ENCODE measurements at regions of chr2 and their contacts with region 1.

Region 1: GRCh38 chr2:100818606-100819369 is 1.2 kb upstream of the NPAS2 start:
- DNase-seq: peak; percentile 90
- H3K4me3 ChIP-seq: peak overlapping the region; percentile 61 to 87 (median 63)
- H3K27ac ChIP-seq: peak overlapping the region; percentile 85
- H3K4me1 ChIP-seq: peaks cover 49% of the 10 kb centered on the region
- H3K27me3 ChIP-seq: no peaks in the 10 kb centered on the region
- CTCF ChIP-seq: peak; percentile 44 to 51
- POLR2A ChIP-seq: no peak

Region 2: DNA sequence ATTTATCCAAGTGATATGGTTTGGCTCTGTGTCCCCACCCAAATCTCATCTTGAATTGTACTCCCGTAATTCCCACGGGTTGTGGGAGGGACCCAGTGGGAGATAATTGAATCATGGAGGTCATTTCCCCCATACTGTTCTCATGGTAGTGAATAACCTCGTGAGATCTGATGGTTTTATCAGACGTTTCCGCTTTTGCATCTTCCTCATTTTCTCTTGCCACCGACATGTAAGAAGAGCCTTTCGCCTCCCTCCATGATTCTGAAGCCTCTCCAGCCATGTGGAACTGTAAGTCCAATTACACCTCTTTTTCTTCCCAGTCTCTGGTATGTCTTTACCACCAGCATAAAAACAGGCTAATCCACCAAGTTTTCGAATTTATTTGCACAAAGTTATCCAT is 381.0 kb before region 1 on chr2:
- CTCF ChIA-PET with region 1: no interaction called
- POLR2A ChIA-PET with region 1: no interaction called
- dilution Hi-C with region 1: no loop called
- intact Hi-C with region 1: no loop called
- DNase-seq: no peak
- H3K4me3 ChIP-seq: no peak overlapping the region
- H3K27ac ChIP-seq: no peak overlapping the region
- H3K4me1 ChIP-seq: no peaks in the 10 kb centered on the region
- H3K27me3 ChIP-seq: peaks cover 0 to 2% of the 10 kb centered on the region in 2 experiments
- CTCF ChIP-seq: no peak
- POLR2A ChIP-seq: no peak

Region 3: GRCh38 chr2:100610381-100610831 is 208.4 kb before region 1 on chr2:
- CTCF ChIA-PET with region 1: interaction called, 8 read pairs
- POLR2A ChIA-PET with region 1: no interaction called
- dilution Hi-C with region 1: no loop called
- intact Hi-C with region 1: loop called (anchors 2 kb)
- DNase-seq: peak; percentile 60
- H3K4me3 ChIP-seq: no peak overlapping the region
- H3K27ac ChIP-seq: no peak overlapping the region
- H3K4me1 ChIP-seq: no peaks in the 10 kb centered on the region
- H3K27me3 ChIP-seq: no peaks in the 10 kb centered on the region
- CTCF ChIP-seq: peak; percentile 64 to 88
- POLR2A ChIP-seq: no peak

Region 4: DNA sequence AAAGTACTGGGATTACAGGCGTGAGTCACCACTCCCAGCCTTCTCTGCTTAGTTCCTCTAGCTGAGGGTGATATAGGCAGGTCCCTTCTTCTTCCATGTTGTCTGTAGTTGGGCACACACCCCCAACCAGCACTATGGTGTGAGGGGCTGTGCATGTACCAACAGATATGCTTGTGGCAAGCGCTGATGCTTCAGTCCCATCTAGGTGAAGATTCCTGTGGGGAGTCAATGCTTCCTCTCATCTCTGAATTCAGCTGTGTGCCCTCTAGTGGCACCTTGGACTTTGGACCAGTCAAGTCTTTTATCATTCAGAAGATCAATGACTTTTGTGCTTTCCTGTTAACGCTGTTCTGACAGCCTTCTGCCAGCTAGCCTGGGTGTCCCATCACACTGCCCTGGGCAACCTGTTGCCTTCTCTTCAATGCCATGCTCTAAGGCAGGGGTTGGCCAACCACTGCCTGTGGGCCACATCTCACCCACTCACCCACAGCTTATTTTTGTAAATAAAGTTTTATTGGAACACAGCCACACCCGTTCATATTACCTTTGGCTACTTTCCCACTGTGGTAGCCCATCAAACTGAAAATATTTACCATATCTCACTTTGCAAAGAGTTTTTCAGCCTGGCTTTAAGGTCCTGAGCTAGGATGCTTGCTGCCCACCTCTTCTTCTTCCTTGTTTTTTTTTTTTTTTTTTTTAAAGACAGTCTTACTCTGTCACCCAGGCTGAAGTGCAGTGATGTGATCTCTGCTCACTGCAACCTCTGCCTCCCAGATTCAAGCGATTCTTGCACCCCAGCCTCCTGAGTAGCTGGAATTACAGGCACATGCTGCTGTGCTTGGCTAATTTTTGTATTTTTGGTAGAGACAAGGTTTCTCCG is 52.1 kb after region 1 on chr2:
- CTCF ChIA-PET with region 1: interaction called, 6 read pairs
- POLR2A ChIA-PET with region 1: no interaction called
- dilution Hi-C with region 1: no loop called
- intact Hi-C with region 1: loop called (anchors 1 kb)
- DNase-seq: no peak
- H3K4me3 ChIP-seq: no peak overlapping the region
- H3K27ac ChIP-seq: no peak overlapping the region
- H3K4me1 ChIP-seq: peaks cover 10% of the 10 kb centered on the region
- H3K27me3 ChIP-seq: no peaks in the 10 kb centered on the region
- CTCF ChIP-seq: peak; percentile 13 to 18
- POLR2A ChIP-seq: no peak

Region 5: DNA sequence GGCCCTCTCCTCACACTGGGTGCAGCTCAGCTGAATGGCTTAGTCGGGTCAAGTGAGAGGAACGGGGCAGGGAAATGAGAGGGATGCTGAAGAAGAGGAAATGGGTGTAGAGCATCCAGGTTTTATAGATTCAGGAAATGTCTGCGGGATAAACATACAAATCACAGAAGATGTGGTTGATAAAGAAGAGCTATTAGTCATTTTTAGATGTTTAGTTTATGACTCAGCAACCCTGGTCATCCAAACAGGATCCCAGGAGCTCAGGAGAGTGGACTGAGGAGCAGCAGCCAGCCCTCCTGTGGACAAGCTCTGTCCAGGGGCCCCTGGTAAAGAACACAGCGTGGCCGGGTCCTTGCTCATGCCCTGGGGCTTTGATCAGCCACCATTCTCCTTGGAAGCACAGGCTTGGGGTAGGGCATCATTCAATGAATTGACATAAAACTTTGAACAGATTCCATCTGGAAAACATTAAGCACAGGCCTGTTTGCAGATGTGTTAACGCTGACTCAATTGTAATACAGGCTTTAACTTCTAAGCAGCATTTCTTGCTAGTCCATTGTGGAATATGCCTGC is 84.1 kb after region 1 on chr2:
- CTCF ChIA-PET with region 1: interaction called, 17 read pairs
- POLR2A ChIA-PET with region 1: interaction called, 3 read pairs
- dilution Hi-C with region 1: no loop called
- intact Hi-C with region 1: loop called (anchors 1 kb)
- DNase-seq: peak; percentile 94
- H3K4me3 ChIP-seq: no peak overlapping the region
- H3K27ac ChIP-seq: peak overlapping the region; percentile 79
- H3K4me1 ChIP-seq: peaks cover 62% of the 10 kb centered on the region
- H3K27me3 ChIP-seq: no peaks in the 10 kb centered on the region
- CTCF ChIP-seq: peak in 1 of 2 donors; percentile 24
- POLR2A ChIP-seq: peak; percentile 78

Region 6: DNA sequence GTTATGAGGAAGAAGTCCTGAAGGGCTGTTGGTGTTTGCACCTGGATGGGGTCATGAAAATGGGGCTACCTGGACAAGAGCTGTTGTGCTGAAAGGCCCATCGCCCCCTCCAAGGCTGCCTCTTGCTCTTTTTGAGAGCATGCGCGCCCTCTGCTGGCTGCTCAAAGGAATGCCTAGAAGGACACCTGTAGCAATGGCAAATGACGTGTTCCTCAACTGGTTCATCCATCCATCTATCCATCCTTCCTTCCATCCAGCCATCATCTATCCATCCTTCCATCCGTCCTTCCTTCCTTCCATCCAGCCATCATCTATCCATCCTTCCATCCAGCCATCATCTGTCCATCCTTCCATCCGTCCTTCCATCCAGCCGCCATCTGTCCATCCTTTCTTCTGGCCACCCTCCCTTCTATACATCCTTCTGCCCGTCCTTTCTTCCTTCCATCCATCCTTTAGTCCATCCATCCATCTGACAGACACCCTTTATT is 166.1 kb after region 1 on chr2:
- CTCF ChIA-PET with region 1: no interaction called
- POLR2A ChIA-PET with region 1: no interaction called
- dilution Hi-C with region 1: no loop called
- intact Hi-C with region 1: loop called (anchors 1 kb)
- DNase-seq: peak; percentile 78
- H3K4me3 ChIP-seq: no peak overlapping the region
- H3K27ac ChIP-seq: no peak overlapping the region
- H3K4me1 ChIP-seq: peaks cover 7% of the 10 kb centered on the region
- H3K27me3 ChIP-seq: no peaks in the 10 kb centered on the region
- CTCF ChIP-seq: peak; percentile 76 to 84
- POLR2A ChIP-seq: no peak